Sciatic nerve (tissue), 2 donors: ENCODE measurements at regions of chr15 and their contacts with region 1.

Region 1: GRCh38 chr15:74453925-74454763 is 6.8 kb downstream of the UBL7 start:
- DNase-seq: no peak
- ATAC-seq: no peak

Region 2: DNA sequence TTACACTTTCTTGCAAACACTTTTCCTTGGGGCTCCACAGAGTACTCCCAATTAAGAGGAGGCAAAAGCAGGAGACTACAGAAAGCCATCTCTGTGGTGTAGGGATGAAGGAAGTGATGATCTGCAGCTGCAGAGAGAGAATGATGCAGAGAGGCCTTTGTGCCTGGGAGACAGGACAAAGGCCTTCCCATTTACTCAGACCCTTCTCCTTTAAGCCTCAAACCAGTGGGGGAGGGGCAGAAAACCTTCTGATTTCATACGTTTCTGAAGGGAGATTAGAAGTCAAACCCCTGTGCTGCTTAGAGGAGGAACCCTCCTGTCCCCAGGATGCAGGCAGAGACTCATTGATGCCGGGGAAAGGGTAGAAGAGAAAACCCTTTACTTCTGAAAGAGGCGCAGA is 1271.1 kb before region 1 on chr15:
- intact Hi-C with region 1: no loop called
- DNase-seq: no peak
- ATAC-seq: no peak

Region 3: GRCh38 chr15:74497584-74497983 is 43.4 kb after region 1 on chr15:
- intact Hi-C with region 1: no loop called
- DNase-seq: no peak
- ATAC-seq: no peak

Region 4: GRCh38 chr15:74620636-74621545 is 166.7 kb after region 1 on chr15:
- intact Hi-C with region 1: loop called (anchors 10 kb)
- DNase-seq: peak; percentile 75
- ATAC-seq: peak; percentile 48